Endothelial cell of umbilical vein (primary cell): ENCODE measurements at regions of chr9 and their contacts with region 1.

Region 1: DNA sequence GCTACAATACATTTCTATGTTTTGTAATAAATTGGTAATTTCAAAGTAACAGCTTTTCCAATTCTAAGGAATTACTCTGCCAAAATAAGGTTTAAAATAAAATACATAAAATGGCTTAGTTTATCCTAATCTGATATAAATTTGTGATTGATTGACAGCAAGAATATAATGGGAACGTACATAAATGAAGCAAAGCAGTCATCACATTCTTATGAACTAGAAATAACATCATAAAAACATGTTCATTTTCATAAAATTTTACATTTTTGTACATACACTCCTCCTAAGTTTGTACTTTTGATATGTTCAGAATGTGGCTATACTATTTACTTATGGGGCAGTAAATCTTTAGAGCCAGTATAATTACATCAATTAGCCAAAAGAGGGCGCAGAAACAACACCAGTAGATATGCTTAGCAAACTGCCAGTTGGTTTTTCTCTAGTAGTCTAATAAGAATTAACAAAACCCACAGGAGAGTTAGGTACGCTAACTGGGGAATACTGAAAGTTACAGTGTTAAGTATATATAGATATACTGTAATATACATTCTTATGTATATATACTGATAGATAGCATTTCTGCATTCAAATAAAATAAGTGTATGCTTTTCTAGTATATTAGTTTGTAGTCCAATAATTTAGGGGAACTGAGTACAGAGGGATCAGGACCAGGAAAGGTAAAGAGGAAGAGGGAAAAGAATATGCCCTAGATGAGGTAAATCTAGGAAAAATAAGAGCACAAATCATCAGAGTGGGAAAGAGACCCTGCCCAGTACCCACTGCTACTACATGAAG is 76.8 kb downstream of the ZDHHC21 start:
- DNase-seq: peak; percentile 68
- H3K4me3 ChIP-seq: no peak overlapping the region
- H3K27ac ChIP-seq: no peak overlapping the region
- H3K4me1 ChIP-seq: no peaks in the 10 kb centered on the region
- H3K27me3 ChIP-seq: no peaks in the 10 kb centered on the region
- CTCF ChIP-seq: peak; percentile 37 to 46
- POLR2A ChIP-seq: no peak

Region 2: GRCh38 chr9:14652729-14653377 is 36.5 kb after region 1 on chr9:
- CTCF ChIA-PET with region 1: interaction called, 13 read pairs
- POLR2A ChIA-PET with region 1: no interaction called
- dilution Hi-C with region 1: no loop called
- intact Hi-C with region 1: loop called (anchors 5 kb)
- DNase-seq: peak; percentile 54
- H3K4me3 ChIP-seq: no peak overlapping the region
- H3K27ac ChIP-seq: no peak overlapping the region
- H3K4me1 ChIP-seq: no peaks in the 10 kb centered on the region
- H3K27me3 ChIP-seq: no peaks in the 10 kb centered on the region
- CTCF ChIP-seq: peak; percentile 29 to 30
- POLR2A ChIP-seq: no peak

Region 3: GRCh38 chr9:14661421-14662059 is 45.2 kb after region 1 on chr9:
- CTCF ChIA-PET with region 1: interaction called, 28 read pairs
- POLR2A ChIA-PET with region 1: no interaction called
- dilution Hi-C with region 1: no loop called
- intact Hi-C with region 1: loop called (anchors 5 kb)
- DNase-seq: peak; percentile 73
- H3K4me3 ChIP-seq: no peak overlapping the region
- H3K27ac ChIP-seq: no peak overlapping the region
- H3K4me1 ChIP-seq: peaks cover 6% of the 10 kb centered on the region
- H3K27me3 ChIP-seq: no peaks in the 10 kb centered on the region
- CTCF ChIP-seq: peak; percentile 28 to 50
- POLR2A ChIP-seq: no peak

Region 4: DNA sequence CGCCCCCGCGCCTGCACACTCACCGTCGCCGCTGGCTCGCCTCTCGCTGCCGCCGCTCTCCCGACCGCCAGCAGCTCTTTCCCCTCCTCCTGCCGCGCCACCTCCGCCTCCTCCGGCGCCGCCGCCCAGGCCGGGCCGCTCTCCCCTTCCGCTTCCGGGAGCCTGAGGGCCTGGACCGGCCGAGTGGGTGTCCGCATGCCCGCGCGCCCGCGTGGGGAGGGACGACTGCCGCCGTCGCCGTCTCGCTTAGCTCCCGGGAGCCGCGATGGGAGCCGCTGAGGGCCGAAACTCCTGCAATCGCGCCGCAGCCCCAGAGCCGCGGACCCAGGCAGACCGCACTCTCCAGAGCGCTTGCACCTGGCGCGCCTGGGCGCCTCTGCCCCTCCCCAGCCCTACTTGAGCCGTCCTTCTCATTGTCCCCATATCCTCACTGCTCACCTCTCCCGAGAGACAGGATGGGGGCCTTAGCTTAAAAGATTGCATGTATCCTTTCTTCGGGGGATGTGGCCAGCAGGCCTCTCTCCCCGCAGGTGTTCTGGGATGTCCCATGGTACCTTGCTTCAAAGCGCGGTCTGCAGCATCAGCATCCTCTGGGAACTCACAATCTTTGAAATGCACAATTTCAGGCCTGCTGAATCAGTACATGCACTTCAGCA is 76.9 kb after region 1 on chr9 and contains the start of gene ZDHHC21:
- CTCF ChIA-PET with region 1: interaction called, 3 read pairs
- POLR2A ChIA-PET with region 1: no interaction called
- dilution Hi-C with region 1: no loop called
- intact Hi-C with region 1: loop called (anchors 5 kb)
- DNase-seq: peak; percentile 51
- H3K4me3 ChIP-seq: peak within 1 kb of the TSS; percentile 77 to 97 (median 89)
- H3K27ac ChIP-seq: peak within 1 kb of the TSS; percentile 63
- H3K4me1 ChIP-seq: peaks cover 23% of the 10 kb centered on the region
- H3K27me3 ChIP-seq: no peaks in the 10 kb centered on the region
- CTCF ChIP-seq: no peak
- POLR2A ChIP-seq: peak; percentile 78
- total RNA-seq, gene ZDHHC21: 21.0 and 25.9 TPM in 2 replicates

Region 5: GRCh38 chr9:14752271-14752670 is 135.9 kb after region 1 on chr9:
- CTCF ChIA-PET with region 1: interaction called, 4 read pairs
- POLR2A ChIA-PET with region 1: no interaction called
- dilution Hi-C with region 1: no loop called
- intact Hi-C with region 1: loop called (anchors 5 kb)
- DNase-seq: peak; percentile 97
- H3K4me3 ChIP-seq: no peak overlapping the region
- H3K27ac ChIP-seq: peak overlapping the region; percentile 59
- H3K4me1 ChIP-seq: peaks cover 39% of the 10 kb centered on the region
- H3K27me3 ChIP-seq: no peaks in the 10 kb centered on the region
- CTCF ChIP-seq: no peak
- POLR2A ChIP-seq: peak; percentile 42

Region 6: GRCh38 chr9:14846871-14847311 is 230.5 kb after region 1 on chr9:
- CTCF ChIA-PET with region 1: no interaction called
- POLR2A ChIA-PET with region 1: no interaction called
- dilution Hi-C with region 1: no loop called
- intact Hi-C with region 1: loop called (anchors 5 kb)
- DNase-seq: peak; percentile 28
- H3K4me3 ChIP-seq: no peak overlapping the region
- H3K27ac ChIP-seq: no peak overlapping the region
- H3K4me1 ChIP-seq: no peaks in the 10 kb centered on the region
- H3K27me3 ChIP-seq: peaks cover 6 to 14% of the 10 kb centered on the region in 2 experiments
- CTCF ChIP-seq: peak; percentile 77 to 80
- POLR2A ChIP-seq: no peak

Region 7: DNA sequence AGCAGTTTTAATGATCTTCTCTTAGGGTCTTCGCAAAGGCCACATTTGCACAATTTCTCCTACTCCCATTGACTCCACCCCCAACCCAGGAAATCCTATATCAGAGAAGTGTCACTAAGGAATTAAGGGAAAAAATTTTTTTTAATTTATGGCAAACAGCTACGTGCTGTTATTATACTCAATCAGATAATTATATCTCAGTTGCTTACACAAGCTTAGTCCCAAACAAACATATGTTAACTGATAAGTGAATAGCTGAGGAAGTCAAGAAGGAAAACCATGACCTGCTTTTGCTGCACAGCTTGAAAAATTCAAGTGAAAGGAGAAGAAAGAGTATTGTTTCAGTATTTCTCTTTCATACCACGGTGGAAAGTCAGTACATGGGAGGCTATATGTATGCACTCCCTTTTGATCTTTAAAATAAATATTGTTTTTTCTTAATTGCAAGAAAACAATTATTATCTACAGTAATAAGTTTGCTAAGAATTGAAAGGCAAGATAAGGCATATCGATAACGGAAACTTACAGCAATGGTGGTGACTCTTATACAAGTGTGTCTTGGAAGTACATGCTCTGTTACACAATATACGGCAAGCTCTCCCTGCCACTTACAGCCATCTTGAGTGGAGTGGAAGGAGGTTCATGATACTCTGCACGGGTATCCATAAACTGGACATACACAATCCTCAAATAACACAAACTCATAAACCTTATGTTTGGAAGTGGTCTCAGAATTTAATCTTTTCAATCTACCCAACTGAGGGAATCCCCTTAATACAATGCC is 461.8 kb after region 1 on chr9:
- CTCF ChIA-PET with region 1: no interaction called
- POLR2A ChIA-PET with region 1: no interaction called
- dilution Hi-C with region 1: no loop called
- intact Hi-C with region 1: no loop called
- DNase-seq: peak; percentile 52
- H3K4me3 ChIP-seq: no peak overlapping the region
- H3K27ac ChIP-seq: no peak overlapping the region
- H3K4me1 ChIP-seq: no peaks in the 10 kb centered on the region
- H3K27me3 ChIP-seq: no peaks in the 10 kb centered on the region
- CTCF ChIP-seq: no peak
- POLR2A ChIP-seq: no peak

Region 8: DNA sequence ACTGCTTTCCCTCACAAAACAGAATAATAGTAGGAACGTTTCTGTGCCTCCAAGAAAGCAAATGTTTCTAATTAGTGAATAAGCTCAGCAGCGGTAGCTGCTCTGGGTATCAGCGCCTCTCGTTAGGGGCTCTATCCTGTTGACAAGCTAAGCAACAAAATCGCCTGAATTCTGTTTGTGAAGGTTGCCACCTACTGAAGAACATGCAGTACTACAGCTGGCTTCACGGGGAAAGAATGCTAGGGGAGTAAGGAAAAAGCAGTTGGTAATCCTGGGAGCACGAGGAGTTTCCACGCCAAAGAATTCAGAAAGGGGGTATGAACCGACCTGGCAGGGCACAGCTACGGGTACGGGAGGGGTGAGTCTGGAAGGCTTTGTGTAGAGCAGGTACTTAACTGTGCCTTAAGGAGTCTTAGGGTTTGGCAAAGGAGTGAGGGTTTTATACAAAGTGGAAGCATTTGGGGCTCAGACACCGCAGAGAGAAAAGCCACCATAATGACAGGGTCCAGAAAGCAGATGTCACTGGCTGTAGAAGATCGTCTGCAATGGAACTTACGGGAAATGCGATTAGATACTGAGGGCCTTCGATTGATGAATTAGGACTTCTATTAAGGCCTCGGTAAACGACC is 518.9 kb after region 1 on chr9:
- CTCF ChIA-PET with region 1: no interaction called
- POLR2A ChIA-PET with region 1: no interaction called
- dilution Hi-C with region 1: no loop called
- intact Hi-C with region 1: loop called (anchors 5 kb)
- DNase-seq: peak; percentile 82
- H3K4me3 ChIP-seq: no peak overlapping the region
- H3K27ac ChIP-seq: no peak overlapping the region
- H3K4me1 ChIP-seq: no peaks in the 10 kb centered on the region
- H3K27me3 ChIP-seq: no peaks in the 10 kb centered on the region
- CTCF ChIP-seq: peak; percentile 79 to 91
- POLR2A ChIP-seq: no peak